Caco-2 (cell line): ENCODE measurements at regions of chr10 and their contacts with region 1.

Region 1: GRCh38 chr10:73529089-73529832 is 33.4 kb upstream of the PPP3CB start:
- DNase-seq: peak; percentile 86 to 87
- H3K4me3 ChIP-seq: no peak overlapping the region
- H3K4me3 Mint-ChIP-seq: no peak overlapping the region
- H3K27ac Mint-ChIP-seq: no peak overlapping the region
- H3K4me1 ChIP-seq: peaks cover 3% of the 10 kb centered on the region; the same call in 1 of the 2 replicates
- H3K4me1 Mint-ChIP-seq: peaks cover 8% of the 10 kb centered on the region
- H3K27me3 ChIP-seq: no peaks in the 10 kb centered on the region
- H3K27me3 Mint-ChIP-seq: no peaks in the 10 kb centered on the region
- CTCF ChIP-seq: peak; percentile 89 to 92

Region 2: DNA sequence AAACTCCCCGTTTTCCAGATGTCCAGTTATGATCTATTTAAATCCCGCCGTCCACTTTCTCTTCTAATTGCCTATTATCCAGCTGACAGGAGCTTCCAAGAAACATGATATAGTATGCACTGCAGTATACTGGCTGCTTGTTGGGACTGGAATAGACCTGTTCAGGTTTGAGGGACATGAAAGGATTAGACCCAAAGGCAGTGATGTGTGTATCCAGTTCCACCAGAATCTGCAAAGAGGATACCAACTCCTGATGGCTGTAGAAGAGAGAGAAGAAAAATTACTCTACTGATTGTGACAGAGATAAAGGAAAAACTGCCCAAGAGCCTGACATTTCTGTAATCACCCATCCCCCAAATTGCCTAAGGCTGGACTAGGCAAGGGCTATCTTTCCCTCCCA is 104.7 kb before region 1 on chr10:
- CTCF ChIA-PET with region 1: no interaction called
- POLR2A ChIA-PET with region 1: no interaction called
- intact Hi-C with region 1: no loop called
- DNase-seq: no peak
- H3K4me3 ChIP-seq: no peak overlapping the region
- H3K4me3 Mint-ChIP-seq: no peak overlapping the region
- H3K27ac Mint-ChIP-seq: no peak overlapping the region
- H3K4me1 ChIP-seq: peaks cover 3% of the 10 kb centered on the region
- H3K4me1 Mint-ChIP-seq: no peaks in the 10 kb centered on the region
- H3K27me3 ChIP-seq: no peaks in the 10 kb centered on the region
- H3K27me3 Mint-ChIP-seq: no peaks in the 10 kb centered on the region
- CTCF ChIP-seq: no peak

Region 3: DNA sequence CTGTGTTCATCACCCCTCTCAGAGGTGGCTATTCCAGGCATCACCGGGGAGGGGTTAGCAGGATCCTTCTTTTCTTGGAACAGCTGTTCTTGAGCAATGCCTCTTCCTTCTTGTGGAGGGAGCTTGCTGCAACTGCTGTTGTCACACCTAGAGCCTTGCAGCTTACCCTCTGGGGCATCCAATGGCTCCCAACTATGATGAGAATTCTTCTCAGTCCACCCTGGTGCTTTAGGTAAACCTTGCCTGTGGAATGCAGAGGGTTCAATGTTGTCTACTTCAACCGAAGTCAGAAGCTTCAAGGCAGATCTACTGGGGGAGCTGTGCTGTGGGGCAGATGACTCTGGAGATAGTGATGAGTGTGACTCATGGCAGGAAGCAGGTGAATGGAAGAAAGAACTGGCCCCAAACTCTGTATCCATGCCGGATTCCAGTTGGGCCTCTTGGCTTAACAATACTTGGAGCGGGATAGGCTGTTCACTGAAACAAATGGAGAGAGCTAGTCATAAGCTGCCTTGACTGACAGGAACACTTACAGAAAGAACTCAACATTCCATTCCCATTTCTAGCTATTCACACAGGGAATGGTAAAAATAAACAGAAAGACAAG is 11.9 kb before region 1 on chr10:
- CTCF ChIA-PET with region 1: interaction called, 11 read pairs
- POLR2A ChIA-PET with region 1: no interaction called
- intact Hi-C with region 1: no loop called
- DNase-seq: peak in 1 of 2 experiments; percentile 29
- H3K4me3 ChIP-seq: no peak overlapping the region
- H3K4me3 Mint-ChIP-seq: no peak overlapping the region
- H3K27ac Mint-ChIP-seq: peak overlapping the region; percentile 1
- H3K4me1 ChIP-seq: 0 out of 2 replicates have a peak, but pooled peaks cover 3% of the 10 kb centered on the region
- H3K4me1 Mint-ChIP-seq: peaks cover 8% of the 10 kb centered on the region
- H3K27me3 ChIP-seq: no peaks in the 10 kb centered on the region
- H3K27me3 Mint-ChIP-seq: no peaks in the 10 kb centered on the region
- CTCF ChIP-seq: no peak

Region 4: DNA sequence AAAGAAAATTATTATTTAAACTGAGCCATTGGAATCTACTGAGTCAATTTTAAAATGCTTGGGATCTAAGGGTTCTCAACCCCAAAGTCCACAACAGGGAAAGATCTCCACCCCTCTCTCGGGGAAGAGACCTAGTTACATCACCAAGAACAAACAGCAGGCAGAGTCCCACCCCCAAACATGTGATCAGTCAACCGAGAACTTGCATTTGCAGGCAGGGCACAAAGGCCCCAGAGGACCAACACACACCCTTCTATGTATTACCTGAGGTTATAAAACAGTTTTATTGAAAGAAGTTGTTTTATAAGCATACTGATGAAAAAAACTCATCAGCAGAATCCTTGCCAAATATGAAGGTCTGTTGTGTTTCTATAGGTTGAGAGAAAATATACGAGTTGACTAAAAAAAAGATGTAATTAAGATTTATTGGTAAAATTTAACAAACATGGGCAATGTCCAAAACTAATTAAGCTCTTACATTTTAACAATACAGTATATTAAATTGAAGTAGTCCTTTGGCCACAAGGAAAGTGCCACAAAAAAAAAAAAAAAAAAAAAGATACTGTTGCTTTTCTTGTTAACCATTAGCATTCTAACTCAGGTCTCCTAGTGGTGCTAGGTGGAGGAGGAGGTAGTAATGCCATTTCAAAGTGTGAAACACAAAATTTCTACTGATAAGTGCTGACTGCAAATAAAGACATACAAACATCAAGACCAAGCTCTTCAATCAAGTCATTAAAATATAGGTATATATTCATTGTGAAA is 62.9 kb after region 1 on chr10:
- CTCF ChIA-PET with region 1: interaction called, 18 read pairs
- POLR2A ChIA-PET with region 1: no interaction called
- intact Hi-C with region 1: no loop called
- DNase-seq: peak; percentile 86 to 87
- H3K4me3 ChIP-seq: peak overlapping the region; percentile 9; the same call in 1 of the 2 replicates
- H3K4me3 Mint-ChIP-seq: peak overlapping the region; percentile 60
- H3K27ac Mint-ChIP-seq: peak overlapping the region; percentile 96
- H3K4me1 ChIP-seq: peaks cover 35% of the 10 kb centered on the region
- H3K4me1 Mint-ChIP-seq: peaks cover 40% of the 10 kb centered on the region
- H3K27me3 ChIP-seq: no peaks in the 10 kb centered on the region
- H3K27me3 Mint-ChIP-seq: no peaks in the 10 kb centered on the region
- CTCF ChIP-seq: peak; percentile 11 to 14

Region 5: GRCh38 chr10:73625884-73626752 is 96.9 kb after region 1 on chr10:
- CTCF ChIA-PET with region 1: interaction called, 6 read pairs
- POLR2A ChIA-PET with region 1: interaction called, 3 read pairs
- intact Hi-C with region 1: loop called (anchors 1 kb)
- DNase-seq: peak; percentile 93 to 96
- H3K4me3 ChIP-seq: peak overlapping the region; percentile 84
- H3K4me3 Mint-ChIP-seq: peak overlapping the region; percentile 99
- H3K27ac Mint-ChIP-seq: peak overlapping the region; percentile 100
- H3K4me1 ChIP-seq: peaks cover 9% of the 10 kb centered on the region
- H3K4me1 Mint-ChIP-seq: no peaks in the 10 kb centered on the region
- H3K27me3 ChIP-seq: no peaks in the 10 kb centered on the region
- H3K27me3 Mint-ChIP-seq: no peaks in the 10 kb centered on the region
- CTCF ChIP-seq: no peak

Region 6: DNA sequence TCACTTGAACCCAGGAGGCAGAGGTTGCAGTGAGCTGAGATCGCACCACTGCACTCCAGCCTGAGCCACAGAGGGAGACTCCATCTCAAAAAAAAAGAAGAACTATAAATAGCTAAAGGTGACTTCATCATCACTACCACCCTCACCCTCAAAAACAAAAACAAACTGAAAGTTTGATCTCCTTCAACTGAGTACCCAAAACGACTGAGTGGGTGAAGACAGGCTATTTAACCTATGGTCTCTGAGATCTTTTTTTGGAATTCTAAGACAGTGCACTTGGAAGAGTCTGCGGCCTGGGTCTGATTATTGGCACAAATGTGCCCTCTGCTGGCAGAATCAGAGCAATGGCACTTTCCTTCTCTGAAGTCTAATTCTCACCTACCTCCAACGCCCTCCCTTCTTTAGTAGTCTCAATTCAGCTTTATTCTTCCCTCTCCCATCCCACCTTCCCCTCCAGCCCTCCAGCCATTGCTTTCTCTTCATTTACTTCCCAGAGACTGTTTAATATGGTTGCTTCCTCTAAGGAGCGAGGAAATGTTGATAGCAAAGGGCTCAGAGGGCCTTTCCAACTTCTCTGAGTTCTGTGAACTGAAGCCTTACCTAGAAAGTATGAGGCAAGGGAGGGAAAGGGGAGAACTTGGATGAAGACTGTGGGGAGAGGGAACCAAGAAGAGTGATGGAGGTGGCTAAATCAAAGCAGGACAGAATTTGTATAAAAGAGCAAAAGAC is 114.9 kb after region 1 on chr10:
- CTCF ChIA-PET with region 1: interaction called, 52 read pairs
- POLR2A ChIA-PET with region 1: no interaction called
- intact Hi-C with region 1: loop called (anchors 1 kb)
- DNase-seq: peak; percentile 58 to 71
- H3K4me3 ChIP-seq: no peak overlapping the region
- H3K4me3 Mint-ChIP-seq: no peak overlapping the region
- H3K27ac Mint-ChIP-seq: peak overlapping the region; percentile 40
- H3K4me1 ChIP-seq: peaks cover 21% of the 10 kb centered on the region
- H3K4me1 Mint-ChIP-seq: peaks cover 42% of the 10 kb centered on the region
- H3K27me3 ChIP-seq: no peaks in the 10 kb centered on the region
- H3K27me3 Mint-ChIP-seq: no peaks in the 10 kb centered on the region
- CTCF ChIP-seq: peak; percentile 86 to 91

Region 7: GRCh38 chr10:73730153-73730906 is 201.1 kb after region 1 on chr10:
- CTCF ChIA-PET with region 1: no interaction called
- POLR2A ChIA-PET with region 1: interaction called, 11 read pairs
- intact Hi-C with region 1: no loop called
- DNase-seq: peak; percentile 91 to 95
- H3K4me3 ChIP-seq: peak overlapping the region; percentile 98
- H3K4me3 Mint-ChIP-seq: peak overlapping the region; percentile 88
- H3K27ac Mint-ChIP-seq: peak overlapping the region; percentile 94
- H3K4me1 ChIP-seq: no peaks in the 10 kb centered on the region
- H3K4me1 Mint-ChIP-seq: no peaks in the 10 kb centered on the region
- H3K27me3 ChIP-seq: no peaks in the 10 kb centered on the region
- H3K27me3 Mint-ChIP-seq: no peaks in the 10 kb centered on the region
- CTCF ChIP-seq: no peak